GM12878 (cell line): ENCODE measurements at regions of chr7 and their contacts with region 1.

Region 1: DNA sequence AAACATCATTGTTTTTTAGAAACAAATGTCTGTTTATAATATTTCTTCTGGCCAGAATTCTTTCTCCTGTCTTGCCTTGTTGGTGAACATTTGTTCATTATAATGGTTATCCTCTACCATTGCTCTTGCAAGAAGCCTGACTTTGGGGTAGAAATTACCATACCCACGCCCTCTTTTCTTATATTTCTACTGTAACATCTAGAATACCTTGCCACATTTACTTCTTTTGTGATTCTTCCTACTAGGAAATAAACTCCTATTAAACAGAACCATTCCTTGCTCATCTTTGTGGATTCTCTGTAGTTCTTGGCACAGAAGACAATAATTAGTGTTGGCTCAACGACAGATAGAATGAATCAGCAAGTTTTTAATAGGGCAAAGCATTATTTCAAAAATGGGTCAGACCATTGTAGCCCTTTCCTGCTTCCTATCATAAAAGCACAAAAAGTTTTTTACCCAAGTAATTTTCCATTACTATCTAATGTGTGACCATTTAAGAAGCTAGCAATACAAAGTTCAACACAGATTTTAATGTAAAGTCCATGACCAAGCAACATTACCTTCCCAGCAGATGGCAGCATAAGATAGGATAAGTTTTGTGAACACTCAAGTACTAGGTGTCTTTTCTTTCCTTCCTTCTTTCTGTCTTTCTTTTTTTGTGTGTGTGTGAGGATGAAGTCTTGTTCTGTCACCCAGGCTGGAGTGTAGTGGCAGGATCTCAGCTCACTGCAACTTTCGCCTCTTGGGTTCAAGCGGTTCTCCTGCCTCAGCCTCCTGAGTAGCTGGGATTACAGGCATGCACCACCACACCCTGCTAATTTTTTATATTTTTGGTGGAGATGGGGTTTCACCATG is 270.4 kb downstream of the HGF start:
- DNase-seq: peak; percentile 28
- ATAC-seq: peak; percentile 91
- H3K4me3 ChIP-seq: no peak overlapping the region
- H3K27ac ChIP-seq: no peak overlapping the region
- H3K4me1 ChIP-seq: no peaks in the 10 kb centered on the region
- H3K27me3 ChIP-seq: no peaks in the 10 kb centered on the region; a peak in 1 of 4 replicates
- CTCF ChIP-seq: peak; percentile 40 to 72 (median 62); a peak in 5 of 6 replicates
- EP300 ChIP-seq: no peak
- POLR2A ChIP-seq: no peak
- RAD21 ChIP-seq: peak; percentile 91

Region 2: DNA sequence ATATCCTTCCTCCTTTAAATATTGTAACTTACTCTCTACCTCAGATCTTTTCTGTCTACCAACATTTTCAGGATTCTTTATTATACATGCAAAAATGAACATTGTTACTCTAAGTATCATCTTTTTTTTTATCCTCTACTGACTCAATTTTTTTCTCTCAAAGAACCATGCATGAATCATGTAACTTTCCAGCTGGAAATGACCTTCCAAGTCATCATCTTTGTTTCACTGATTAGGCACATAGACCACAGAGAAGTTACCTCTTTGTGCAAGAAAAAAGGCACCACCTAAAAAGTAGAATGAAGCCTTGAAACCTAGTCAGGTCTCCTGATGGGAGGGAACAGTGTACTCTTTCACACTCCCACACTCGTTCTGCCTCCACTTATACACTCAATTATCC is 35.5 kb after region 1 on chr7:
- CTCF ChIA-PET with region 1: no interaction called
- POLR2A ChIA-PET with region 1: no interaction called
- RAD21 ChIA-PET with region 1: no interaction called
- SMC1A ChIA-PET with region 1: no interaction called
- in situ Hi-C with region 1: no loop called
- intact Hi-C with region 1: no loop called
- DNase-seq: no peak
- ATAC-seq: no peak
- H3K4me3 ChIP-seq: no peak overlapping the region
- H3K27ac ChIP-seq: no peak overlapping the region
- H3K4me1 ChIP-seq: no peaks in the 10 kb centered on the region
- H3K27me3 ChIP-seq: no peaks in the 10 kb centered on the region
- CTCF ChIP-seq: no peak
- EP300 ChIP-seq: no peak
- POLR2A ChIP-seq: no peak
- RAD21 ChIP-seq: no peak

Region 3: GRCh38 chr7:81690251-81690650 is 190.8 kb after region 1 on chr7:
- CTCF ChIA-PET with region 1: interaction called, 7 read pairs
- POLR2A ChIA-PET with region 1: no interaction called
- RAD21 ChIA-PET with region 1: interaction called, 15 read pairs
- SMC1A ChIA-PET with region 1: interaction called, 3 read pairs
- in situ Hi-C with region 1: no loop called
- intact Hi-C with region 1: no loop called
- DNase-seq: no peak
- ATAC-seq: no peak
- H3K4me3 ChIP-seq: no peak overlapping the region
- H3K27ac ChIP-seq: no peak overlapping the region
- H3K4me1 ChIP-seq: no peaks in the 10 kb centered on the region
- H3K27me3 ChIP-seq: no peaks in the 10 kb centered on the region
- CTCF ChIP-seq: no peak
- EP300 ChIP-seq: no peak
- POLR2A ChIP-seq: no peak
- RAD21 ChIP-seq: no peak

Region 4: DNA sequence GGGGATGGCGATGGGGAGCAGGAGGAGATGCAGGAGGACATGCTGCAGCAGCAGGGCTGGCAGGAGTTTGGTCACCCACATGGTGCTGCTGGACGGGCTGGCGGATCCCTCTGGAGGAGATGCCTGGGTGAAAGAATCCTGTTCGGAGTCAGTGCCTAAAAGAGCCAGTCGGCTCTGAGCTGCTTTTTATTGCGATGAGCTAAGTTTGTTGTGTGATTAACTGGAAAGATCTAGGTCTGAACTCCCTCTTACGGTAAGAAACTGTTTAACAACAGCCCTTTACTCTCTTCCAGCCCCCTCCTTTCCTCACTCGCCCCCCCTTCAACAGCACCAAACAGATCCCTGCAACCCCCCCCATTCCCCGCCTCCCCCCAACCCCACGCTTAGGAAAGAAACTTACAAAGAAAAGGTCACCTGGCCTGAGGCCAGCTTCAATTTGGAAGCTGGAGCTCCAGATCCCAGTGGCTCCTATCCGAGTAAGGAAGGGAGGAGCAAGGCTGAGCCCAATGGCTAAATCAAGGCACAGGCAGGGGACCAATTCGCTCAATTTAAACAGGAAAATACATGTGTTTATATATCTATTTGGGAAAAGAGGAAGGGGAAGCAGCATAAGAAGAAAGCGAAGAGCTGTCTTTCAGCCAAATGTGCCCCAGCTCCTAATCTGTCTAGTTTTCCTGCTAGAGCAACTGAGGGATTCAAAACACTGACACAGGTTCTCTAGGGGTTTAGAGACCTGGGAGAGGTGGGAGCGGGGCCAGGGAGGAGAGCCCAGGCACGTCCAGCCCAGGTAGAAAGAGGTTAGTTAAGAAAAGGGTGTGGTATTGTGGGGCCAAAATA is 270.6 kb after region 1 on chr7 and contains the start of gene HGF:
- CTCF ChIA-PET with region 1: interaction called, 15 read pairs
- POLR2A ChIA-PET with region 1: interaction called, 3 read pairs
- RAD21 ChIA-PET with region 1: interaction called, 26 read pairs
- SMC1A ChIA-PET with region 1: interaction called, 8 read pairs
- in situ Hi-C with region 1: no loop called
- intact Hi-C with region 1: loop called (anchors 2 kb)
- DNase-seq: no peak
- ATAC-seq: peak; percentile 67
- H3K4me3 ChIP-seq: peak within 1 kb of the TSS; percentile 43
- H3K27ac ChIP-seq: no peak within 1 kb of the TSS
- H3K4me1 ChIP-seq: no peaks in the 10 kb centered on the region; the same call in 1 of the 2 replicates
- H3K27me3 ChIP-seq: peaks cover 0 to 3% of the 10 kb centered on the region in 2 experiments; a peak in 1 of 4 replicates
- CTCF ChIP-seq: no peak
- EP300 ChIP-seq: no peak
- POLR2A ChIP-seq: no peak
- RAD21 ChIP-seq: no peak
- polyA plus RNA-seq, gene HGF: 1.4 to 1.7 TPM

Region 5: GRCh38 chr7:82017334-82017943 is 518.0 kb after region 1 on chr7:
- CTCF ChIA-PET with region 1: interaction called, 96 read pairs
- POLR2A ChIA-PET with region 1: no interaction called
- RAD21 ChIA-PET with region 1: interaction called, 54 read pairs
- SMC1A ChIA-PET with region 1: interaction called, 89 read pairs
- in situ Hi-C with region 1: loop called (anchors 5 kb)
- intact Hi-C with region 1: loop called (anchors 1 kb)
- DNase-seq: no peak
- ATAC-seq: 0 out of 3 replicates have a peak, but pooled peaks have one; percentile 28
- H3K4me3 ChIP-seq: no peak overlapping the region
- H3K27ac ChIP-seq: no peak overlapping the region
- H3K4me1 ChIP-seq: no peaks in the 10 kb centered on the region
- H3K27me3 ChIP-seq: no peaks in the 10 kb centered on the region; a peak in 1 of 4 replicates
- CTCF ChIP-seq: peak; percentile 14 to 52 (median 28); a peak in 2 of 6 replicates
- EP300 ChIP-seq: no peak
- POLR2A ChIP-seq: no peak
- RAD21 ChIP-seq: peak; percentile 71

Region 6: DNA sequence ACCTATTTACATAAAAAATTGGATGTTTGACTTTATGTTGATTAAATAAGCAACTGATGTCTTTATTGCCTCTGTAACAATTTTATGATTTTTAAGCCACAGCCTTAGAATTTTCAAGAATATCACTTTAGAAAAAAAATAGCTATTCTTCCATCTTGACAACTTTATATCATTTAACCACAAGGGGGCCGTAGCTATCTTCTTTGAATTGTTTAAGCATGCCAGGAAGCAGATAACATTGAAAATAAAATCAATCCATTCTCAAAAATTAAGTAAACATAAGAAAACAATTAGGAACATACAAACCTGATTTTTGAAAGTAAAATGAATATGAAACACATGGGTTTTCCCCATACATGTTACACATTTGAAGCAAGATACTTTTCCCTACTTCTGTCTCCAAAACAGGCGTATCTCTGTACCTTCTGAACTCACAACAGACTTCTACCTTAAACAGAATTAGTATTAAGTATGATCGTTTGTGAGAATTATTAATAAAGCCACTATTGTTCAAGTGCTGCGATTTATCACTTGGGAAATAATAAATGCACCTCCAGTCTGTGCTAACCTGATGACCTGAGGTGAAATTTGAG is 735.1 kb after region 1 on chr7:
- CTCF ChIA-PET with region 1: interaction called, 4 read pairs
- POLR2A ChIA-PET with region 1: no interaction called
- RAD21 ChIA-PET with region 1: interaction called, 4 read pairs
- SMC1A ChIA-PET with region 1: interaction called, 4 read pairs
- in situ Hi-C with region 1: loop called (anchors 25 kb)
- intact Hi-C with region 1: loop called (anchors 10 kb)
- DNase-seq: no peak
- ATAC-seq: peak; percentile 60
- H3K4me3 ChIP-seq: no peak overlapping the region
- H3K27ac ChIP-seq: no peak overlapping the region
- H3K4me1 ChIP-seq: no peaks in the 10 kb centered on the region
- H3K27me3 ChIP-seq: no peaks in the 10 kb centered on the region
- CTCF ChIP-seq: peak; percentile 34 to 51 (median 49); a peak in 5 of 6 replicates
- EP300 ChIP-seq: no peak
- POLR2A ChIP-seq: no peak
- RAD21 ChIP-seq: peak; percentile 69

Region 7: GRCh38 chr7:82722946-82723345 is 1223.5 kb after region 1 on chr7:
- CTCF ChIA-PET with region 1: interaction called, 56 read pairs
- POLR2A ChIA-PET with region 1: no interaction called
- RAD21 ChIA-PET with region 1: interaction called, 15 read pairs
- SMC1A ChIA-PET with region 1: interaction called, 37 read pairs
- in situ Hi-C with region 1: no loop called
- intact Hi-C with region 1: loop called (anchors 5 kb)
- DNase-seq: no peak
- ATAC-seq: peak; percentile 67
- H3K4me3 ChIP-seq: no peak overlapping the region
- H3K27ac ChIP-seq: no peak overlapping the region
- H3K4me1 ChIP-seq: no peaks in the 10 kb centered on the region
- H3K27me3 ChIP-seq: no peaks in the 10 kb centered on the region
- CTCF ChIP-seq: no peak
- EP300 ChIP-seq: no peak
- POLR2A ChIP-seq: no peak
- RAD21 ChIP-seq: no peak